ENCODE measurements at regions of chr1 and their contacts with region 1.

Region 1: GRCh38 chr1:154431586-154432373 is 26.6 kb downstream of the IL6R start:
- DNase-seq: no peak
- H3K4me3 ChIP-seq: no peak overlapping the region
- H3K27ac ChIP-seq: no peak overlapping the region
- H3K4me1 ChIP-seq: peaks cover 8 to 20% (median 16%) of the 10 kb centered on the region in 4 experiments
- H3K27me3 ChIP-seq: peaks cover 0 to 2% (median 0%) of the 10 kb centered on the region in 4 experiments; a peak in 1 of 7 replicates
- CTCF ChIP-seq: no peak
- EP300 ChIP-seq: no peak
- POLR2A ChIP-seq: no peak
- RAD21 ChIP-seq: no peak

Region 2: DNA sequence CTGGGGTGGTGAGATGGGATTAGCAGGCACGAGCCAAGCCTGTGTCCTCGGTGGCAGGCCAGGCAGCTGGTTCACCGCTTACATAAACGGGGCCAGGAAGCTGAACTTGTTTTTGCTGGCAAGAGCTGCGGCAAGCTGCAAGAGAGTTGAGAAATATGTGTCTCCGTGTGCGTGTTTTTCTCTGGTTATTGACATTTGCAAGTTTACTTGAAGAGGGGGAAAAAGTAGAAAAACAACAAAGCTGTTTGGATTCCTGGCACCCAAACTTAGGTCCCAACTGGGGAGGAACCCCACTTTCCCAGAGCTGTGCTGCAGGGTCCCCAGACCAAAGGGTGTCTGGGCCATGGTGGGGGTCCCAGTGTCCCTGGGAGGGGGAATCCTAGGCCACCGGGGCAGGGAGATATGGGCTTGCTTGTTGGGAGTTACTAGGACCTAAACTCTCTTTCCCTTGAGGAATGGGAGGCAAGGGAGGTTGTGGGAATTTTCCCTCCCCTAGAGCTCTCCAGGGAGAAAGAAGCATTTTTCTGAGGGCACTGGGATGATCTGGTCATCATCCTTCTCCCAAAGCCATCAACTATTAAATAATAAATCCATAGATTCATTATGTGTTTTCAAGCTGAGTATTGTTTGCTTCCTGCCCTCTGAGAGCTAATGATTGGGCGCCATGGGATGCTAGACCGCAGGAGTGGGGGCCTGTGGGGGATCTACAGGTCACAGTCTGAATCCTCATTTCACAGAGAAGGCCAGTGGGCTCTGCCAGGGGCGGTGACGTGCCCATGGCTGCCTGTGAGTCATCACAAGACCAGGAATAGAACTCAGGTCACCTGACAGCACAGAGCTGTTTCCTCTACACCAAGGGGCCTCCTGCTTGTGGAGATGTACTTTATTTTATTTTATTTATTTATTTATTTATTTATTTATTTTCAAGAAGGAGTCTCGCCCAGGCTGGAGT is 11.9 kb before region 1 on chr1:
- CTCF ChIA-PET with region 1: interaction called, 13 read pairs
- POLR2A ChIA-PET with region 1: no interaction called
- DNase-seq: no peak
- H3K4me3 ChIP-seq: no peak overlapping the region
- H3K27ac ChIP-seq: no peak overlapping the region
- H3K4me1 ChIP-seq: peaks cover 0 to 7% (median 1%) of the 10 kb centered on the region in 4 experiments; a peak in 3 of 7 replicates
- H3K27me3 ChIP-seq: no peaks in the 10 kb centered on the region
- CTCF ChIP-seq: no peak
- EP300 ChIP-seq: no peak
- POLR2A ChIP-seq: no peak
- RAD21 ChIP-seq: no peak

Measured in H1 (cell line).